Posterior cingulate gyrus (tissue), 11 donors: ENCODE measurements at regions of chr14 and their contacts with region 1.

Region 1: GRCh38 chr14:21014761-21015190 is 10.1 kb downstream of the NDRG2 start:
- DNase-seq: peak in 9 of 10 donors; percentile 57 to 97 (median 91)

Region 2: GRCh38 chr14:21039585-21040369 is 25.0 kb after region 1 on chr14:
- intact Hi-C with region 1: loop called (anchors 1 kb)
- DNase-seq: peak in 3 of 10 donors; percentile 28 to 86 (median 65)

Region 3: GRCh38 chr14:21092273-21093011 is 77.7 kb after region 1 on chr14:
- intact Hi-C with region 1: loop called (anchors 5 kb)
- DNase-seq: peak in 9 of 10 donors; percentile 56 to 96 (median 76)

Region 4: GRCh38 chr14:21455911-21456667 is 441.3 kb after region 1 on chr14 and contains the start of gene CHD8:
- intact Hi-C with region 1: no loop called
- DNase-seq: peak; percentile 99 to 100 (median 100)